GM10248 (cell line): ENCODE measurements at regions of chr1 and their contacts with region 1.

Region 1: GRCh38 chr1:18875107-18875795 is 15.8 kb upstream of the TAS1R2 start:
- DNase-seq: peak; percentile 84
- CTCF ChIP-seq: peak; percentile 59

Region 2: DNA sequence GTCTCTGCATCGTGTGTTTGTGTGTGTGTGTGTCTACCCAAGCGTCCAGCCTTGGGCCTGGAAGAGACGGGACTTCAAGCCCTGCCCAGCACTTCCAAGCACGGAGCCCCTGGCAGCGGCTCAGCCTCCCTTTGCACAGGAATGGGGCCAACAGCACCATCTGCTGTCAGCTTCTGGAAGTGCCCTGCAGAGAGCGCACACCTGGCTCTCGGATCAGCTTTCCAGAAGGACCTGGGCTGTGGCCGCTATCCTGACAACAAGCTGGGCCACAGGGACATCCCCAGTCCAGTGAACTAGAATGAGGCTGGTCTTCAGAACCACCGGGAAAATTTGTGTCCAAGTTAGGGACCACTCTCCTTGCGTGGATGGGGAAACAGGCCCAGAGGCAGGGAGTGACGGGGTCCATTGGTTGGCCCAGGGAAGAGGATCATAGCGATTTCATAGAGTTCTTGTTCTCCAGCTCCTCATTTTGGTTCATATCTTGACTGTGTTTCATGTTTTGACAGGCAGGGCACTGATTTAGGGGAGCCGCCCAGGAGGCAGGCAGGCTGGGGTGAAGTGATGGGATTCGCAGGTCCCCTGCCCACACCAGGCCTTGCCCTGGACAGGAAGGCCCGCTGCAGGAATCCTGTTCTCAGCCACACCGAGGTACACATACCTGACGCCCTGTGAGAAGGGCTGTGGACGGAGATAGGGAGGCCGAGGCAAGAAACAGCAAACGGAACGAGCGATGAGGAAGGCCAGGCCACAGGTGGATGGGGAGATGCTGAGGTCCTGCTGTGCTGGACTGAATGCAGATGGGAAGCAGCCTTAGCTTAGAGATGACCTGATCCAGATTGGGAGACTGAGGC is 54.2 kb before region 1 on chr1:
- CTCF ChIA-PET with region 1: no interaction called
- POLR2A ChIA-PET with region 1: no interaction called
- DNase-seq: peak; percentile 85
- CTCF ChIP-seq: peak; percentile 81

Region 3: DNA sequence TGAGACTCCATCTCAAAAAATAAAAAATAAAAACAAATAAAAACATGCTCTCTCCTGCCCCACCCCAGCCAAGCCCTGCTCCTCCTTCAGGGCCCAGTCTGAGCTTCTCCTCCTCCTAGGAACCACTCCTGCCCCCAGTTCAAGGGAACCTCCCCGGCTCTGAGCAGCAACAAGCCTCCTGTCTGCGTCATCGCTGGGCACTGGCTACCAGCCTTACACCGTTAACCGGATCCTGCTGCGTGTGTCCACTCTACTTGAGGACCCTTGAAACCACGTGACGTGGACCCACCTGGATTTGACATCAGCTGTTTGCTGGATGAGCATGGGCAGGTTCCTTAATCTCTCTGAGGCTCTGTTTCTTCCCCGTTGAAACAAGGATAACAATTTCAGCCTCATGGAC is 14.2 kb before region 1 on chr1:
- CTCF ChIA-PET with region 1: interaction called, 14 read pairs
- POLR2A ChIA-PET with region 1: no interaction called
- DNase-seq: no peak
- CTCF ChIP-seq: no peak

Region 4: GRCh38 chr1:18890711-18891425 is 15.6 kb after region 1 on chr1:
- CTCF ChIA-PET with region 1: interaction called, 32 read pairs
- POLR2A ChIA-PET with region 1: no interaction called
- DNase-seq: no peak
- CTCF ChIP-seq: no peak